ENCODE measurements at regions of chr11 and their contacts with region 1.

Region 1: GRCh38 chr11:44483919-44484610 is 81.4 kb upstream of the CD82 start:
- DNase-seq: no peak
- H3K4me3 ChIP-seq: no peak overlapping the region
- H3K27ac ChIP-seq: no peak overlapping the region
- H3K4me1 ChIP-seq: no peaks in the 10 kb centered on the region
- H3K27me3 ChIP-seq: no peaks in the 10 kb centered on the region
- CTCF ChIP-seq: no peak
- POLR2A ChIP-seq: no peak

Region 2: GRCh38 chr11:44454666-44455065 is 29.4 kb before region 1 on chr11:
- intact Hi-C with region 1: loop called (anchors 1 kb)
- DNase-seq: no peak
- H3K4me3 ChIP-seq: no peak overlapping the region
- H3K27ac ChIP-seq: no peak overlapping the region
- H3K4me1 ChIP-seq: no peaks in the 10 kb centered on the region
- H3K27me3 ChIP-seq: no peaks in the 10 kb centered on the region
- CTCF ChIP-seq: no peak
- POLR2A ChIP-seq: no peak

Measured in breast epithelium (tissue), 4 donors.